Activated CD4-positive, alpha-beta T cell treated with anti-CD3 and anti-CD28 coated beads, Interleukin-2, amount 10 ng/mL, durations not matched to agents 24 days and 14 days (primary cell): ENCODE measurements at regions of chr18 and their contacts with region 1.

Region 1: GRCh38 chr18:22800551-22800951 is 132.6 kb upstream of the RBBP8 start:
- DNase-seq: no peak
- H3K4me3 Mint-ChIP-seq: no peak overlapping the region
- H3K27ac Mint-ChIP-seq: no peak overlapping the region
- H3K4me1 Mint-ChIP-seq: no peaks in the 10 kb centered on the region
- H3K27me3 Mint-ChIP-seq: peaks cover 27% of the 10 kb centered on the region

Region 2: DNA sequence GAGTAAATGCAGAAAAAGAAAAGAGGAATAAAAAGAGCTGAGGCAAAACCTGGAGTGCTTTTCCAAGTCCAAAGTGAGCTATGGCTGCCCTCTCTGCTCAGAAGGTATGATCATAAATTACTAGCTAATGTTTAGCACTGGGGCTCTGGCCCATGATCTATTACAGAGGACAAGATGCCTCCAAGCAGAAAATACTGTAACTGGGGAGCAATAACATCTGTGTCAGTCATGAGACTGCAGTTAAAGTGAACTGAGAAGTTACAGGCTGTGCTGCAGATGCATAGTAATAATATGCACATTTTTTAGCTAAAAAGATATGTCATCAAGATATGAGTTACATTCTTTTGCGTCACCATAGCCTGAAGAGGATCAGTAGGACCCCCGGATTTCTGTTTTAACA is 76.8 kb before region 1 on chr18:
- intact Hi-C with region 1: no loop called
- DNase-seq: peak; percentile 25
- H3K4me3 Mint-ChIP-seq: no peak overlapping the region
- H3K27ac Mint-ChIP-seq: no peak overlapping the region
- H3K4me1 Mint-ChIP-seq: no peaks in the 10 kb centered on the region
- H3K27me3 Mint-ChIP-seq: peaks cover 4% of the 10 kb centered on the region

Region 3: DNA sequence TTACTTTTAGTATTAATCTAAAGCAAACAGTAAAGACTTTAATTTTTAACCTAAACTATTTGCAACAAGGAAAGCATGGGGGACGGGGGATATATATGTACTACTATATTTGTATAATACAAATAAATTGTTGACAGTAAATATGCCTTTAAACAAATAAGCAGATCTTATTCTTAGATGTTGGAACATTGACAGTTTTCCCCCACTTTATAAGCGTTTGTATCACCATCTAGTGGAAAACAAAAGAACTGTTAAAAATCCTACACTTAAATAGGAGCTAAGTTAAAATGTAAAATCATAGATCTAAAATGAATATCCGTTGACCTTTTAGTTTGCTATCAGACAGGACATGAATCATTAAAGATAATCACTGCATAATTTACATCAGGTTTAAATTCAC is 182.6 kb after region 1 on chr18:
- intact Hi-C with region 1: loop called (anchors 1 kb)
- DNase-seq: no peak
- H3K4me3 Mint-ChIP-seq: no peak overlapping the region
- H3K27ac Mint-ChIP-seq: no peak overlapping the region
- H3K4me1 Mint-ChIP-seq: peaks cover 9% of the 10 kb centered on the region
- H3K27me3 Mint-ChIP-seq: no peaks in the 10 kb centered on the region

Region 4: DNA sequence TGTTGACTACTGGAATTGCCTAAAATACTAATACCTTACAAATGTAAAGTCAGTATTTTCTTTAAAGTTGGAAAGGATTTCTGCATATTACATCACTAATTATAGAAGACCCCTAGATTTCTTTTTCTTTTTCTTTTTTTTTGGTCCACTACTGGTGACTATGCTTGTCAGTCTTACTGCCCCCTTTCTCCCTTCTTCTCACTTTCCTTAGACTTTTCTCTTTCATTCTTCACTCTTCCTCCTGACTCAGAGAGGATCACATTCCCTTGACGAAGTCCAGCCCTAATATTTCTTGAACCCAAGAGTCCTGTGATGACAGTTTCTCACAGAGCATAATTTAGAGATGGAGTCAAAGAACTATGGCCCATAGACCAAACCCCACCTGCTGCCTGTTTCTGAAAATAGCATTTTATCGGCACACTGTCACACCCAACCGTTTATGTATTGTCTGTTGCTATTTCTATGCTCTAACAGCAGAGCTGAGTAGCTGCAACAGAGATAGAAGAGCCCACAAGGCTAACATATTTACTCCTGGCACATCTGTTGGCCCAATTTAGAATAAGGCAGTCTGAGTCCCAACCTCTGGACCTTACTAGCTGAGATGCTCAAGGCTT is 611.9 kb after region 1 on chr18:
- intact Hi-C with region 1: loop called (anchors 2 kb)
- DNase-seq: no peak
- H3K4me3 Mint-ChIP-seq: no peak overlapping the region
- H3K27ac Mint-ChIP-seq: no peak overlapping the region
- H3K4me1 Mint-ChIP-seq: no peaks in the 10 kb centered on the region
- H3K27me3 Mint-ChIP-seq: no peaks in the 10 kb centered on the region